Right ventricle myocardium inferior (tissue), 1 donor: ENCODE measurements at regions of chr12 and their contacts with region 1.

Region 1: GRCh38 chr12:93176165-93176564 is 201.6 kb upstream of the NUDT4 start:
- DNase-seq: no peak
- ATAC-seq: no peak

Region 2: DNA sequence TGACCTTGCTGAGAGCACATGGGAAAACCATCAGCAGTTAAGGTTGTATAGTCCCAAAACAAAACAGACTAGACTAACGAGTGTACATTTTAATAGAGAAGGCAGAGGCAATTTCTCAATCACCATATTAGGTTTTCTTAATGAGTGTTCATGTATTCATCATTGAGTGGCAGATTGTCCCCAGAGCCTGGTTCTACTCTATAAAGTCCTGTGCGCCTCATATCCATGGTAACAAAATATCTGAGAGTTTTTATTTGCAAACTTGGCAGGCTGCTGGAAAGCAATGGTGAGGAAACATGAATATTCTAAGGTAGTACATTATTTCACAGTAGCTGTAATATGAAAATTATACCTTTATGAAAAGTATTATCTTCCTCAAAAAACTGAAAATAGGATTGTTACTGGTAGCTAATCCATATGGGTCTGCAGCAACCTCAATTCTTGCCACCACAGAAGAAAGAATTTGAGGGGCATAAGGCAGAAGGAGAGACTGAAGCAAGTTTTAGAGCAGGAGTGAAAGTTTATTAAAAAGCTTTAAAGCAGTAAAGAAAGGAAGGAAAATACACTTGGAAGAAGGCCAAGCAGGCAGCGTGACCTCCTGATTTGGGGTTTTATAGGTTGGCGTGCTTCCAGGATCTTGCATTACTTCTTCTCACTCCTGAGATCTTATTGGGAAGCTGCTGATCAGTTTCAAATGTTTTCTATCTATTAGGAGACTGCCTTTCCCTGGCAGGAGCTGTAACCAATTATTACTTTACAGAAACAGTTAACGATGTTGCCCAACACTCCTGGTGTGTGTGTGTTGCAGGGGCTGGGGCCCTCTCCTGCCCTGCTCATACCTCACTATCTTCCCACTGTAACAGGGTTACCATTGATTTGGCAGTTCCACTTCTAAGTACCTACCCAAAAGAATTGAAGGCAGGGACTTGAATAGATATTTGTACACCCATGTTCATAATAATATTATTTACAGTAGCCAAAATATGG is 47.6 kb after region 1 on chr12:
- intact Hi-C with region 1: loop called (anchors 5 kb)
- DNase-seq: no peak
- ATAC-seq: peak; percentile 34

Region 3: DNA sequence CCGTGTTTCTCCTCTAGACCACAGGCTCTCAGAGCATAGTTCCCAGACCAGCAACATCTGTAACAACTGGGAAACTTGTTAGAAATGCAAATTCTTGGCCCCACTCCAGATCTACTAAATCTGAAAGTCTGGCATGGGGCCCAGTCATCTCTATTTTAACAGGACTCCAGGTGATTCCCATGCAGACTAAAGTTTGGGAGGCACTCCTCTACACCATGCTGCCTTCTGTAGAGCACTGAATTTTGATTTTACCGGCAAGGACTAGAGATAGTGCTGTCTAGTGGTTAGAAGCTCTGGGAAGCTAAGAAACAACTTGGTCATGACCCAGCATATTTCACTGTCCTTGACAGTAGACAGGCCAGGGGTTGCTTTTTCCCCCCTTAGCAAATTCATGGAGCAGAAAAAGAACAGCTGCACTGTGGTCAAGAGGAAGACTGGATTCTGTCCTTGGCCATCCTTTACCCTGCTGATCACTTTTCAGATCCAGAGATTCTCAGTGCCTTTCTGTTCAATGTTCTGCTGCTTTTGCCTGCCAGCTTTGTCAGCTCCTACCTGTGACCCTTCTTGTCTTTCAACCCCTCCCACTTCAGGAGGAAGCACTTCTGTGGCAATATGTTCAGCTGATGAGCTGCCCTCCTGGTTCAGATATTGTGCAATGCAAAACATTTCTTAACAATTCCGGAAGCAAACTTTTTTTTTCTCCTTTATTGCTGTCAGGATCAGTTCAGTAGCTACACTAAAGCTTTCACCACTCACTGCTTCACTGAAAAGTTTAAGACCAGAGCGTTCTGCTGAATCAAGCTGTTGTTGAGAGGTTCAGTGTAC is 67.7 kb after region 1 on chr12:
- intact Hi-C with region 1: loop called (anchors 5 kb)
- DNase-seq: no peak
- ATAC-seq: peak; percentile 65